PC-9 (cell line): ENCODE measurements at regions of chr11 and their contacts with region 1.

Region 1: GRCh38 chr11:65497141-65498041 is 1.5 kb upstream of the MALAT1 start:
- DNase-seq: peak; percentile 91 to 100
- H3K4me3 ChIP-seq: peak overlapping the region; percentile 99
- H3K27ac ChIP-seq: peak overlapping the region; percentile 97
- H3K4me1 ChIP-seq: peaks cover 39% of the 10 kb centered on the region
- H3K27me3 ChIP-seq: no peaks in the 10 kb centered on the region
- CTCF ChIP-seq: peak; percentile 13; the same call in 1 of the 2 replicates

Region 2: GRCh38 chr11:64185816-64186498 is 1311.4 kb before region 1 on chr11 and contains the start of gene STIP1:
- CTCF ChIA-PET with region 1: no interaction called
- POLR2A ChIA-PET with region 1: interaction called, 14 read pairs
- intact Hi-C with region 1: no loop called
- DNase-seq: peak; percentile 100
- H3K4me3 ChIP-seq: peak within 1 kb of the TSS; percentile 64
- H3K27ac ChIP-seq: peak within 1 kb of the TSS; percentile 64
- H3K4me1 ChIP-seq: peaks cover 28% of the 10 kb centered on the region
- H3K27me3 ChIP-seq: no peaks in the 10 kb centered on the region
- CTCF ChIP-seq: peak; percentile 31; the same call in 1 of the 2 replicates
- total RNA-seq, gene STIP1: 267 and 299 TPM in 2 replicates

Region 3: GRCh38 chr11:65454696-65455456 is 42.5 kb before region 1 on chr11:
- CTCF ChIA-PET with region 1: no interaction called
- POLR2A ChIA-PET with region 1: interaction called, 7 read pairs
- intact Hi-C with region 1: loop called (anchors 5 kb)
- DNase-seq: peak; percentile 81 to 91
- H3K4me3 ChIP-seq: peak overlapping the region; percentile 58
- H3K27ac ChIP-seq: peak overlapping the region; percentile 21
- H3K4me1 ChIP-seq: peaks cover 25% of the 10 kb centered on the region
- H3K27me3 ChIP-seq: no peaks in the 10 kb centered on the region
- CTCF ChIP-seq: no peak

Region 4: DNA sequence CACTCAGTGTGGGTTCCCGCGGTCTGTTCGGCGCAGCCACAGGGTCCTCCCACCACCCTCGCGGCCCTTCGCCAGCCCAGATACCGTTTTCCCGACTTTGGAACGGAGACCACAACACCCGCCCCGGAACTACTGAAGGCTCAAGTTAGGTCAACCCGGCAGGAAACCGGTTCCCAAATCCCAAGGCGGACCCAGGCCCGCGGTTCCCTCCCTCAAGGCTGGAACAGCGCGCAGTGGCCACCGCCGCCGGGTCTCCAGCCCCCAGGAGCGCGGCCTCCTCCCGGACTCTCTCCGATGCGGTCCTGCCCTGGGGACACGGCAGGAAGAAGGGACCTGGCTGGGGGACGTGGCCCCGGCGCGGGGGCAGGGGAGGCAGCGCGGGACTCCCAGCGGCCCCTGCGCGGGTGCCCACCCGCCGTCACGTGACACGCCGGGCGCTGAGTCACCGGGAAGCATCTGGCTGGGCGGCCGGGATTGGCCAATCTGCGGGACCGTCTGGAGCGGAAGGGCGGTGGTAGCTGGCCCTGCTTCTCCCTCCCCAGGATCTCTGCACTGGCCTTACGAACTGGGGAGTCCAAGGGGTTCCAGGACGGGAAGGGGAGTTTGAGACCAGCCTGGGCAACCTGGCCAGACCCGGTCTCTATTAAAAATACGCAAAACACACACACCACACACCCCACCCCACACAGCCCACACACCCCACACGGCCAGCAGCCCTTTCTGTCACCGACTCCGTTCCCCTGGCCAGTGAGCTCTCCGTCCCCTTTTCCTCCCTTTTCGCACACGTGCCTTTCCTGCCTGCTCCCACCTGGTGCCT is 20.0 kb before region 1 on chr11:
- CTCF ChIA-PET with region 1: interaction called, 18 read pairs
- POLR2A ChIA-PET with region 1: interaction called, 40 read pairs
- intact Hi-C with region 1: loop called (anchors 1 kb)
- DNase-seq: peak; percentile 87 to 98
- H3K4me3 ChIP-seq: peak overlapping the region; percentile 74
- H3K27ac ChIP-seq: peak overlapping the region; percentile 88
- H3K4me1 ChIP-seq: peaks cover 61% of the 10 kb centered on the region
- H3K27me3 ChIP-seq: no peaks in the 10 kb centered on the region
- CTCF ChIP-seq: no peak

Region 5: GRCh38 chr11:65779851-65780577 is 282.6 kb after region 1 on chr11:
- CTCF ChIA-PET with region 1: no interaction called
- POLR2A ChIA-PET with region 1: no interaction called
- intact Hi-C with region 1: loop called (anchors 10 kb)
- DNase-seq: peak; percentile 62 to 90
- H3K4me3 ChIP-seq: peak overlapping the region; percentile 58
- H3K27ac ChIP-seq: peak overlapping the region; percentile 52
- H3K4me1 ChIP-seq: peaks cover 28% of the 10 kb centered on the region
- H3K27me3 ChIP-seq: no peaks in the 10 kb centered on the region
- CTCF ChIP-seq: peak; percentile 94